ENCODE measurements at regions of chr6 and their contacts with region 1.

Region 1: GRCh38 chr6:50791900-50792508 is 26.7 kb upstream of the TFAP2B start:
- DNase-seq: no peak
- ATAC-seq: no peak
- H3K4me3 ChIP-seq: no peak overlapping the region
- H3K4me3 Mint-ChIP-seq: no peak overlapping the region
- H3K27ac ChIP-seq: no peak overlapping the region
- H3K27ac Mint-ChIP-seq: no peak overlapping the region
- H3K4me1 ChIP-seq: no peaks in the 10 kb centered on the region
- H3K4me1 Mint-ChIP-seq: no peaks in the 10 kb centered on the region
- H3K27me3 ChIP-seq: no peaks in the 10 kb centered on the region
- H3K27me3 Mint-ChIP-seq: peaks cover 0 to 17% (median 5%) of the 10 kb centered on the region in 5 donors

Region 2: GRCh38 chr6:50655848-50656453 is 136.1 kb before region 1 on chr6:
- CTCF ChIA-PET with region 1: no interaction called
- POLR2A ChIA-PET with region 1: no interaction called
- intact Hi-C with region 1: loop called in 1 of 2 experiments (anchors 2 kb)
- DNase-seq: no peak
- ATAC-seq: no peak
- H3K4me3 ChIP-seq: no peak overlapping the region
- H3K4me3 Mint-ChIP-seq: no peak overlapping the region
- H3K27ac ChIP-seq: no peak overlapping the region
- H3K27ac Mint-ChIP-seq: no peak overlapping the region
- H3K4me1 ChIP-seq: no peaks in the 10 kb centered on the region
- H3K4me1 Mint-ChIP-seq: no peaks in the 10 kb centered on the region
- H3K27me3 ChIP-seq: no peaks in the 10 kb centered on the region
- H3K27me3 Mint-ChIP-seq: no peaks in the 10 kb centered on the region